CD8-positive, alpha-beta T cell (primary cell): ENCODE measurements at regions of chrX and their contacts with region 1.

Region 1: DNA sequence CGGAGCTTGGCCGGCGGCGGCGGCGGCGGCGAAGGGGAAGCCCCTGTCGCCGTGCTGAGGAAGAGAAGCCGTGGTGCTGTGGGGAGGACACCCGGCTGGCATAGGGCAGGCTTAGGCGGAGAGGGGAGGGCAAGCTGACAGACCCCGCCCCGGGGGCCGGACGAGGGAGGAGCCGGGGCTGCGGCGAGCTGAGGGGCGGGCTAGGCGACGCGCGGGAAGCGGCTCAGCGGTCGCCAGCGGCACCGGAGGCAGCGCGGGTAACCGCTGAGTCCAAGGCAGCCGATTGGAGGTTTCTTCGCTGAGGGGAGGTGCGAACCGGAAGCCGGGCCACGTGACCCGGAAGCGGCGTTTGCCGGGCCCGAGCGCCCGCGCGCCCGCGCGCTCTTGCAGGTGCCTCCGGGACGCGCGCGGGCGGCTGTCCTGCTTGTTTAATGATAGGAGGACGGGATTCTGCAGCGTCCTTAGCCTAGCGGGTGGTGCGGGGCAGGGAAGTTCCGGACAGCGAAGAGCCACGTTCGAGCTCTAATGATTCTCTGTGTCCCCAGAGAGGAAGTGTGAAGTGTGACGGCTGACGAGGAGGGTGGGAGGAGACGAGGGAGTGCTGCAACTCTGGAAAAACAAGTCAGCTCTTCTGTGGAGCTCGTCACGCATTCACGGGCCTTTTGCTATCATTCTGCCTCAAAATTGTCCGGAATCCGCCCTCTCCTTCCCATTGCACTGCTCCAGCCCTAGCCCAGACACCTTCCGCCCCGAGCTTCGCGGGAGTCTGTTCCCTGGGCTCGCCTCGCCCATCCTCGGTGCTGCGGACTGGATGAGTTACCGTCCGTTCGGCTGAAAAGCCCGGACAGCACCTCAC is at the start of gene AP1S2:
- DNase-seq: peak; percentile 85 to 99 (median 91)
- ATAC-seq: peak; percentile 96
- H3K4me3 ChIP-seq: peak within 1 kb of the TSS; percentile 60 to 69
- H3K4me3 Mint-ChIP-seq: peak within 1 kb of the TSS; percentile 94
- H3K27ac ChIP-seq: peak within 1 kb of the TSS; percentile 82 to 98
- H3K27ac Mint-ChIP-seq: peak within 1 kb of the TSS; percentile 99
- H3K4me1 ChIP-seq: no peaks in the 10 kb centered on the region
- H3K4me1 Mint-ChIP-seq: peaks cover 25% of the 10 kb centered on the region
- H3K27me3 ChIP-seq: no peaks in the 10 kb centered on the region
- H3K27me3 Mint-ChIP-seq: no peaks in the 10 kb centered on the region
- CTCF ChIP-seq: no peak
- total RNA-seq, gene AP1S2: 10.9 to 14.1 TPM

Region 2: GRCh38 chrX:14872851-14873675 is 981.9 kb before region 1 on chrX and contains the starts of genes FANCB and MOSPD2:
- CTCF ChIA-PET with region 1: no interaction called
- POLR2A ChIA-PET with region 1: no interaction called
- intact Hi-C with region 1: loop called (anchors 5 kb)
- DNase-seq: peak; percentile 85 to 97 (median 92)
- ATAC-seq: peak; percentile 89
- H3K4me3 ChIP-seq: peak within 1 kb of the TSS; percentile 81 to 83
- H3K4me3 Mint-ChIP-seq: peak within 1 kb of the TSS; percentile 84
- H3K27ac ChIP-seq: peak within 1 kb of the TSS; percentile 79 to 86
- H3K27ac Mint-ChIP-seq: peak within 1 kb of the TSS; percentile 92
- H3K4me1 ChIP-seq: peaks cover 9% of the 10 kb centered on the region
- H3K4me1 Mint-ChIP-seq: peaks cover 21% of the 10 kb centered on the region
- H3K27me3 ChIP-seq: no peaks in the 10 kb centered on the region
- H3K27me3 Mint-ChIP-seq: no peaks in the 10 kb centered on the region
- CTCF ChIP-seq: no peak
- total RNA-seq, gene FANCB: 2.5 to 3.1 TPM
- total RNA-seq, gene MOSPD2: 4.2 to 4.6 TPM

Region 3: GRCh38 chrX:15674841-15675489 is 180.0 kb before region 1 on chrX:
- CTCF ChIA-PET with region 1: no interaction called
- POLR2A ChIA-PET with region 1: interaction called, 13 read pairs
- intact Hi-C with region 1: loop called (anchors 1 to 2 kb)
- DNase-seq: peak; percentile 75 to 96 (median 90)
- ATAC-seq: peak; percentile 86
- H3K4me3 ChIP-seq: peak overlapping the region; percentile 89 to 99
- H3K4me3 Mint-ChIP-seq: no peak overlapping the region
- H3K27ac ChIP-seq: peak overlapping the region; percentile 100
- H3K27ac Mint-ChIP-seq: no peak overlapping the region
- H3K4me1 ChIP-seq: peaks cover 16% of the 10 kb centered on the region
- H3K4me1 Mint-ChIP-seq: peaks cover 27% of the 10 kb centered on the region
- H3K27me3 ChIP-seq: no peaks in the 10 kb centered on the region
- H3K27me3 Mint-ChIP-seq: no peaks in the 10 kb centered on the region
- CTCF ChIP-seq: no peak

Region 4: DNA sequence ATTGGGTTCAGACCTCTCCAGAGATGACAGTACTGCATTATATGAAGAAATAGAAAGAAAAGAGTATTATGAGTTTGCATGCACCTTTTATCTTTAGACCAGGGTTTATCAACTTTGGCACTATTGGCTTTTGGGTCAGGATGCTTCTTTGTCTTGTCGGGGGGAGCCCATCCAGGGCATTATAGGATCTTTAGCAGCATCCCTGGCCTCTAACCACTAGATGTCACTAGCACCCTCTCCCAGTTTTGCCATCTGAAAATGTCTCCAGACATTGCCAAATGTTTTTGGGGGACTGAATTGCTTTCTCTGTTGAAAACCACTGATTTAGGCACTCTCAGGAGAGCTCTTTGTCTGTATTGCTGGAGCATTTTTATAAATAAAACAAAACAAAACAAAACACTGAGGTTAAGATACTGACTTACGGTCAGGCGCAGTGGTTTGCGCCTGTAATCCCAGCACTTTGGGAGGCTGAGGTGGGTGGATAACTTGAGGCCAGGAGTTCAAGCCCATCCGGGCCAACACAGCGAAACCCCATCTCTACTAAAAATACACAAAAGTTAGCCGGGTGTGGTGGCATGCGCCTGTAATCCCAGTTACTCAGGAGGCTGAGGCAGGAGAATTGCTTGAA is 93.3 kb before region 1 on chrX:
- CTCF ChIA-PET with region 1: no interaction called
- POLR2A ChIA-PET with region 1: no interaction called
- intact Hi-C with region 1: loop called in 1 of 2 experiments (anchors 10 kb)
- DNase-seq: peak in 5 of 9 experiments; percentile 22 to 66 (median 50)
- ATAC-seq: peak; percentile 54
- H3K4me3 ChIP-seq: no peak overlapping the region
- H3K4me3 Mint-ChIP-seq: no peak overlapping the region
- H3K27ac ChIP-seq: no peak overlapping the region
- H3K27ac Mint-ChIP-seq: peak overlapping the region; percentile 52
- H3K4me1 ChIP-seq: peaks cover 15% of the 10 kb centered on the region
- H3K4me1 Mint-ChIP-seq: peaks cover 37% of the 10 kb centered on the region
- H3K27me3 ChIP-seq: no peaks in the 10 kb centered on the region
- H3K27me3 Mint-ChIP-seq: no peaks in the 10 kb centered on the region
- CTCF ChIP-seq: peak; percentile 32

Region 5: GRCh38 chrX:15890463-15890862 is 35.5 kb after region 1 on chrX:
- CTCF ChIA-PET with region 1: no interaction called
- POLR2A ChIA-PET with region 1: no interaction called
- intact Hi-C with region 1: no loop called
- DNase-seq: no peak
- ATAC-seq: no peak
- H3K4me3 ChIP-seq: no peak overlapping the region
- H3K4me3 Mint-ChIP-seq: no peak overlapping the region
- H3K27ac ChIP-seq: no peak overlapping the region
- H3K27ac Mint-ChIP-seq: no peak overlapping the region
- H3K4me1 ChIP-seq: no peaks in the 10 kb centered on the region
- H3K4me1 Mint-ChIP-seq: no peaks in the 10 kb centered on the region
- H3K27me3 ChIP-seq: no peaks in the 10 kb centered on the region
- H3K27me3 Mint-ChIP-seq: no peaks in the 10 kb centered on the region
- CTCF ChIP-seq: no peak

Region 6: DNA sequence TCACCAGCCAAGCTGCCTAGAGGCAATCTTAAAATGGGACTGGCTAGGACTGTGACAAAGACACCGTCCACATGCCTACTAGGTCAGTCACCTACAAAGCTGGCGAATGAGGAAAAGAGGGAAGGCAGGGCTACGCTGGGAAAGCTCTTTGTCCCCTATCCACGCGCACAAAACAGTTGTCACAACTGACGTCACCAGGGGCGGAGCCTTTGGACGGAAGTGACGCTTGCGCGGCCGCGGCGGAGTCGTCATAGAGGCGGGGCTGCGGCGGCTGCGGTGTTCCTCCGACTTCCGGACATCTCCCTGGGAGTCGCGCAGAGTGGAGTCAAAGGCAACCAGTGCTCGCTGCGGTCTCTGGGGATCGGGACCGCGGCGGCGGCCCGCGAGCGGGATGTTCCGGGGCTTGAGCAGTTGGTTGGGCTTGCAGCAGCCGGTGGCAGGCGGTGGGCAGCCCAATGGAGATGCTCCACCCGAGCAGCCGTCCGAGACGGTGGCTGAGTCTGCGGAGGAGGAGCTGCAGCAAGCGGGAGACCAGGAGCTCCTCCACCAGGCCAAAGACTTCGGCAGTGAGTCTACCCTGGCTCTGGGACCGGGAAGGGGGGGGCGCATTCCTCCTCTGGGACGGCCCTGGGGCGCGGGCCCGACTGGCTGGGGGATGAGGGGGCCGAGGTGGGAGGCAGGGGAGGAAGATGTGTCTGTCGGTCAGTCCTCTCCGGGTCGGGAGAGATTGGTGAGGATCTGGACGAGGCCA is 864.6 kb after region 1 on chrX and contains the start of gene SYAP1:
- CTCF ChIA-PET with region 1: no interaction called
- POLR2A ChIA-PET with region 1: no interaction called
- intact Hi-C with region 1: loop called in 1 of 2 experiments (anchors 10 kb)
- DNase-seq: peak; percentile 84 to 99 (median 91)
- ATAC-seq: peak; percentile 84
- H3K4me3 ChIP-seq: peak within 1 kb of the TSS; percentile 61 to 87
- H3K4me3 Mint-ChIP-seq: peak within 1 kb of the TSS; percentile 91
- H3K27ac ChIP-seq: peak within 1 kb of the TSS; percentile 95 to 98
- H3K27ac Mint-ChIP-seq: peak within 1 kb of the TSS; percentile 99
- H3K4me1 ChIP-seq: peaks cover 17% of the 10 kb centered on the region
- H3K4me1 Mint-ChIP-seq: peaks cover 34% of the 10 kb centered on the region
- H3K27me3 ChIP-seq: no peaks in the 10 kb centered on the region
- H3K27me3 Mint-ChIP-seq: no peaks in the 10 kb centered on the region
- CTCF ChIP-seq: no peak
- total RNA-seq, gene SYAP1: 71.1 to 76.5 TPM

Region 7: DNA sequence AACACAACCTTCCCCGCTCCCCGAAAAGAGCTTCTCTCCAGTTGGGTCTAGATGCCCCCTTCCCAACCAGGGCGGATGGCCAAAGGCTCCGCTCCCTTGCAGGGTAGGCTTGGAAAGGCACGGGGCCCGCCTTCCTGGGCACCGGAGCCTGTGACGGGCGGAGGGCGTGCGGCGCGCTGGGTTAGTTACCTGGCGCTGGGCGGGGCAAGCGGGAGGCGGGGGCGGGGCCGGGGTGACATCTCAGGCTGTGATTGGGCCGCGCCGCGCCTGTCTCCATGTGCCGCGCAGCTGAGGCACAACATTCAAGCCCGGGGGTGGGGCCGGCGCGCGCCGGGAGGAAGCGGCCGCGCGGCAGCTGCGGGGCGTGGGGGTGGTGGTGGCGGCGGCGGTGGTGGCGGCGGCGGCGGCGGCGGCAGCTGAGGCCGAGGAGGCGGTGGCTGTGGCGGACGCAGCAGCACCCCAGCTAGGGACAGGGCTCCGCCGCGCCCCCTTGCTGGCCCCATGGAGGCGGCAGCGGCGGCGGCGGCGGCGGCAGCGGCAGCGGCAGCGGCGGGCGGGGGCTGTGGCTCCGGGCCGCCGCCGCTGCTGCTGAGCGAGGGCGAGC is 1091.5 kb after region 1 on chrX and contains the start of gene REPS2:
- CTCF ChIA-PET with region 1: no interaction called
- POLR2A ChIA-PET with region 1: no interaction called
- intact Hi-C with region 1: loop called in 1 of 2 experiments (anchors 5 kb)
- DNase-seq: peak; percentile 58 to 87 (median 75)
- ATAC-seq: peak; percentile 97
- H3K4me3 ChIP-seq: peak within 1 kb of the TSS; percentile 46 to 54
- H3K4me3 Mint-ChIP-seq: peak within 1 kb of the TSS; percentile 81
- H3K27ac ChIP-seq: peak within 1 kb of the TSS in 1 of 2 experiments; percentile 33
- H3K27ac Mint-ChIP-seq: no peak within 1 kb of the TSS
- H3K4me1 ChIP-seq: peaks cover 3% of the 10 kb centered on the region
- H3K4me1 Mint-ChIP-seq: peaks cover 7% of the 10 kb centered on the region
- H3K27me3 ChIP-seq: no peaks in the 10 kb centered on the region
- H3K27me3 Mint-ChIP-seq: peaks cover 10% of the 10 kb centered on the region
- CTCF ChIP-seq: no peak
- total RNA-seq, gene REPS2: 0.11 TPM in 1 of 2 experiments, not detected in the other